ENCODE measurements at regions of chr9 and their contacts with region 1.

Region 1: DNA sequence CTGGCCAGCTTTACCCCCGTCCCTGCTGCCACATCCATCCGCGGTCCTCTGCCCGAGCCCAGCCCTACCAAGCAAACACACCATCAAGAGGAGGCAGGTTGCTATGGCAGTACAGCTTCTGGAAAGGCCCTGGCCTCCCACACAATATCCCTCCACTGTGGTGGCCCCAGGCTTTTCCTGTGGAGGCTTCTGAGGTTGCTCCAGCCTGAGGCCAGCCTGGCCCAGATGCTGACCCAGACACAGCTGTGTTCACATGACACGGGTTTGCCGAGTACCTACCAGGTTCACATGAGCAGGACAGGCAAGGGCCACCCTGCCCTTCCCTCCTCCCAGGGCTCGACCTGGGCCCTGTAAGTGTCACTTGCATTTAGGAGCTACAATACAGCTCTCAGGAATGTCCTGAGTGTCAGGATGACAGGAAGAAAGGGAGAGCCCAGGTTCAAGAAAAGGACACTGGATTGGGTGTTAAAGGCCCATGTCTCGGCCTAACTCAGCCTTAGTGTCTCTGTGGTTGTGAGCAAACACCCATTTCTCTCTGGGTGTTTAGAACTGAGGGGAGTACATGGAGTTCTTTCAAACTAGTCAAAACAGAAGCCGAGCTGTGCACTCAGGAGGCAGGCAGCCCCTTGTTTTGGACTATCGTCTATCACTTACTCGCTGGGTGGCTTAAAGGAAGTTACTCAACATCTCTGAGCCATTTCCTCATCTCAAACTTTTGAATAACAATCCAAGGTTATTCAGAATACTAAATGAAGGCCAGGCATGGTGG is 40.2 kb downstream of the NAIF1 start:
- DNase-seq: no peak
- ATAC-seq: no peak
- H3K4me3 ChIP-seq: no peak overlapping the region
- H3K27ac ChIP-seq: no peak overlapping the region
- H3K4me1 ChIP-seq: no peaks in the 10 kb centered on the region
- H3K27me3 ChIP-seq: no peaks in the 10 kb centered on the region
- CTCF ChIP-seq: no peak

Region 2: GRCh38 chr9:127991042-127991756 is 35.8 kb before region 1 on chr9:
- intact Hi-C with region 1: loop called in 1 of 2 experiments (anchors 5 kb)
- DNase-seq: no peak
- ATAC-seq: no peak
- H3K4me3 ChIP-seq: no peak overlapping the region
- H3K27ac ChIP-seq: no peak overlapping the region
- H3K4me1 ChIP-seq: peaks cover 13% of the 10 kb centered on the region
- H3K27me3 ChIP-seq: no peaks in the 10 kb centered on the region
- CTCF ChIP-seq: no peak

Region 3: GRCh38 chr9:128094166-128094967 is 67.4 kb after region 1 on chr9:
- intact Hi-C with region 1: no loop called
- DNase-seq: peak; percentile 89 to 95
- ATAC-seq: peak; percentile 69 to 75 (median 72)
- H3K4me3 ChIP-seq: peak overlapping the region; percentile 29
- H3K27ac ChIP-seq: peak overlapping the region; percentile 84
- H3K4me1 ChIP-seq: peaks cover 60% of the 10 kb centered on the region
- H3K27me3 ChIP-seq: no peaks in the 10 kb centered on the region
- CTCF ChIP-seq: no peak

Region 4: DNA sequence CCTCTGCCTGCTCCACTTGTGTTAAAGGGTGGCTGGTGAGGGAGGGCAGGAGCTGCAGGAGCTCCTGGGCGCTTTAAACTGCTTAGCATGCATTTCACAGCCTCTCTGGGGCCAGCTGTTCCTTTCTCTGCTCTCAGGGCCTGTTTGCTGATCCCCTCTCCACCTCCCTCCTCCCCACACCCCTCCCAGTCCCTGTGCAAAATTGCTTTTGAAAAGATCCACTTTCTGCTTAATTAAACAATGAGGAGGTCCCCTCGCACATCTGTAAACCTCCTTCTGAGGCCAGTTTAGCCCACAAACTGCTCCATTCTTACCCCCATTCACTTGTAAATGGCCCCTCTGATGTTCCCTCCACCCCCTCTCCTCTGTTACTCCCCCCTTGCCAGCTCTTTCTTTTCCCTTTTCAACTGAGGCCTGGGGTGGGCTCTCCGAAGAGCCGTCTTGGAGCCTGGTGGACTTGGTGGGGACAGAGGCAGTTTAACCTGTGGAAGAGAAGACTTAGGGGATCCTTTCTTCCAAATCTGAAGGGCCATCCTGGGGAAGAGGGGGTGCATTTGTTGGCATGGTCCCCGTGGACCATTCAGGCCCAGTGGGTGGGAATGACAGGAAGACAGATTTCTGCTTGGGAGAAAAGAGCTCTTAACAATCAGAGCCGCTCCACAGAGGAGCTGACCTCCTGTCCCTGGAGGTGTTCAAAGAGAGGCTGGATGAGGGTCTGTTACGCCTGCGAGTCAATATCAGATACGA is 356.2 kb after region 1 on chr9:
- intact Hi-C with region 1: no loop called
- DNase-seq: no peak
- ATAC-seq: no peak
- H3K4me3 ChIP-seq: no peak overlapping the region
- H3K27ac ChIP-seq: no peak overlapping the region
- H3K4me1 ChIP-seq: no peaks in the 10 kb centered on the region
- H3K27me3 ChIP-seq: no peaks in the 10 kb centered on the region
- CTCF ChIP-seq: no peak